ENCODE measurements at regions of chr16 and their contacts with region 1.

Region 1: GRCh38 chr16:77675464-77676324 is 46.6 kb upstream of the NUDT7 start:
- DNase-seq: peak; percentile 43 to 57 (median 49)
- H3K4me3 ChIP-seq: no peak overlapping the region
- H3K4me3 Mint-ChIP-seq: no peak overlapping the region
- H3K27ac ChIP-seq: no peak overlapping the region
- H3K27ac Mint-ChIP-seq: no peak overlapping the region
- H3K4me1 ChIP-seq: peaks cover 20 to 28% of the 10 kb centered on the region in 2 donors
- H3K4me1 Mint-ChIP-seq: peaks cover 25% of the 10 kb centered on the region
- H3K27me3 ChIP-seq: peaks cover 0 to 3% of the 10 kb centered on the region in 2 donors
- H3K27me3 Mint-ChIP-seq: peaks cover 0 to 3% (median 0%) of the 10 kb centered on the region in 3 donors
- CTCF ChIP-seq: peak; percentile 86

Region 2: GRCh38 chr16:77805398-77805797 is 129.7 kb after region 1 on chr16:
- intact Hi-C with region 1: no loop called
- DNase-seq: no peak
- H3K4me3 ChIP-seq: no peak overlapping the region
- H3K4me3 Mint-ChIP-seq: no peak overlapping the region
- H3K27ac ChIP-seq: no peak overlapping the region
- H3K27ac Mint-ChIP-seq: no peak overlapping the region
- H3K4me1 ChIP-seq: no peaks in the 10 kb centered on the region
- H3K4me1 Mint-ChIP-seq: no peaks in the 10 kb centered on the region
- H3K27me3 ChIP-seq: no peaks in the 10 kb centered on the region
- H3K27me3 Mint-ChIP-seq: peaks cover 0 to 4% (median 4%) of the 10 kb centered on the region in 3 donors
- CTCF ChIP-seq: no peak

Region 3: DNA sequence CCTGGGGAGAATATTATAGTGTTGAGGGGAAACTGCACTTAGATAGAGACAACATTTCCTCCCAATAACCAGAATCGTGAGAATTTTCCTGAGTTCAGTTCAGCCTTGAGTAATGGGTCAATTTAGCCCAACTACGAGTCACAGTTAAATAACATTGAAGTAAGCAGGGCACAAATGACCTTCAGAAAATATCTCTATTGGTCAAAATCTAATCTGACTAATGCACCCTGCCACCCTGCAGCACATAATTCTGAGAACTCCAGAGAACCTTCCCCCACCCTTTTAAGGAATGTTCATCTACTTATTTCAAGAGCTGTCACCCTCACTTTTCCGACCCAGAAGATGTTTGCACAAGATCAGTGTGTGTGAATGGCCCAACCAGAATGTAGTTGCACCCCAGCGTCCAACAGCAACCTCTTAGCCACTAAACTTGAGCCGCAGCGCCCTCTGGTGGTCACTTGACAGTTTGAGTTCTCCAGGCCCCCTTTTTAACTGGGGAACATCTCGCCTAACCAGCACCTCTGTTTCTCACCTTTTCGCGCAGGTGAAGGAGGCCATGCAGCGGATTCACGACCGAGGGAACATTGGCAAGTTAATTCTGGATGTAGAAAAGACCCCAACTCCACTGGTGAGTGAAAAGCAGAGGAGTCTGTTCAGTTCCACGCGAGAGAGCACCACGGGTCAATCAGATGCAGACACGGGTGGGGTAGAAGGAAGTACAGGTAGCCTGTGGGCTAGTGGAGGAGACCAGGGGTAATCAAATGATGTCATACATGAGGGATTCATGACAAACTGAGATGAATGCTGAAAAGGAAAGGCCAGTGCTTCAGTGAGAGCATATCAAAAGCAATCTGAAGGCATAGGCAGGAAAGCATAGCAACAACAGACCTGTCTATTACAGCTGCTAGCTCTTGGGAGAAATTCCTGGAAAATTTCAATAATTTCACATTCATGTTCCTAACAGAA is 295.9 kb after region 1 on chr16:
- intact Hi-C with region 1: loop called (anchors 1 to 2 kb)
- DNase-seq: peak; percentile 43 to 64 (median 62)
- H3K4me3 ChIP-seq: no peak overlapping the region
- H3K4me3 Mint-ChIP-seq: no peak overlapping the region
- H3K27ac ChIP-seq: no peak overlapping the region
- H3K27ac Mint-ChIP-seq: no peak overlapping the region
- H3K4me1 ChIP-seq: no peaks in the 10 kb centered on the region
- H3K4me1 Mint-ChIP-seq: no peaks in the 10 kb centered on the region
- H3K27me3 ChIP-seq: peaks cover 0 to 2% of the 10 kb centered on the region in 2 donors
- H3K27me3 Mint-ChIP-seq: peaks cover 3 to 4% (median 3%) of the 10 kb centered on the region in 3 donors
- CTCF ChIP-seq: peak; percentile 78

Region 4: DNA sequence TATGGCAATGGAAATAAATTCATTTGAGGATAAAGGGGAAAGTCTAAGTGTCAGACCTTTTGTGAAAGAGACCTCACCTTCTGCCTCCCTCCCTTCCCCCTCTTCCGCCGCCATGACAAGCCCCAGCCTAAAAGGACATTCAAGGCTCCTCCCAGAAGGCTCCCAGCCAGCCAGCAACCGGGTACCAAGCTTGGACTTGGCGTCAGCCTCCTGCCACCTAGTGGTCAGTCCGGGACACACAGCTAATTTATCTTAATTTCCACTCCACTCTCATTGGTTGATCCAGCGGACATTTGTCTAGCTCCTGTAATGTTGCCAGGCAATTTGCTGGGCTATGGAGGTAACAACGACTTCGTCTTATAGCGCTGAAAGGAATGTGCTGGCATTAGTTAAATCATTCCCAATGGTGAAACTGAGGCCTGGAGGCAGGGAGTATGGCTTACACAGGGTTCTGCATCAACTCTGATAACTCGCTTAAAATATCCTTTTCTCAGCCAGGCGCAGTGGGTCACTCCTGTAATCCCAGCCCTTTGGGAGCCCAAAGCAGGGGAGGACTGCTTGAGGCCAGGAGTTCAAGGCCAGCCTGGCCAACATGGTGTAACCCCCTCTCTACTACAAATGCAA is 327.3 kb after region 1 on chr16:
- intact Hi-C with region 1: loop called in 1 of 2 experiments (anchors 10 kb)
- DNase-seq: peak; percentile 42 to 63 (median 62)
- H3K4me3 ChIP-seq: no peak overlapping the region
- H3K4me3 Mint-ChIP-seq: no peak overlapping the region
- H3K27ac ChIP-seq: no peak overlapping the region
- H3K27ac Mint-ChIP-seq: no peak overlapping the region
- H3K4me1 ChIP-seq: no peaks in the 10 kb centered on the region
- H3K4me1 Mint-ChIP-seq: no peaks in the 10 kb centered on the region
- H3K27me3 ChIP-seq: no peaks in the 10 kb centered on the region
- H3K27me3 Mint-ChIP-seq: peaks cover 0 to 7% (median 1%) of the 10 kb centered on the region in 3 donors
- CTCF ChIP-seq: peak; percentile 85

Measured in CD14-positive monocyte (primary cell).